Activated CD4-positive, alpha-beta memory T cell treated with anti-CD3 and anti-CD28 coated beads for 36 hours (primary cell): ENCODE measurements at regions of chr7 and their contacts with region 1.

Region 1: DNA sequence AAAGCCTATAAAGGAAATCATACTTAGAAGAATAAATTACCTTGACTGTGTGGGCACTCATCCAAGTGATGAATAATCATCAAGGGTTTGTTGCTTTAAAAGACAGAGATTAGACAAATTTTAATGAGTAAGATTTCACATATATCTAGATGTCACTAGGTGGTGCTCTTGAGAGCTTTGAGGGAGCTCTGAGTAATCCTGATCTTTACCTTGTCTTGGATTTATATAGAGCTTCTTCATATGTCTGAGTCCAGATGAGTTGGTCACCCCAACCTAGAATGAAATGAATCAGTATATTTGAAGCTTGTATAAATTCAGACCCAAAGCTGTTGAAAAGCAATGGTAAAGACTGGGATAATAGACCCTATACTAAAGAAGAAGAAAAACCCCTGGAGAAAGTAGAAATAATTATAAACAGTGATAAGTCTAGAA is 3.7 kb downstream of the AGR2 start:
- DNase-seq: no peak
- H3K4me3 Mint-ChIP-seq: no peak overlapping the region
- H3K27ac Mint-ChIP-seq: no peak overlapping the region
- H3K4me1 Mint-ChIP-seq: no peaks in the 10 kb centered on the region
- H3K27me3 Mint-ChIP-seq: peaks cover 7% of the 10 kb centered on the region

Region 2: DNA sequence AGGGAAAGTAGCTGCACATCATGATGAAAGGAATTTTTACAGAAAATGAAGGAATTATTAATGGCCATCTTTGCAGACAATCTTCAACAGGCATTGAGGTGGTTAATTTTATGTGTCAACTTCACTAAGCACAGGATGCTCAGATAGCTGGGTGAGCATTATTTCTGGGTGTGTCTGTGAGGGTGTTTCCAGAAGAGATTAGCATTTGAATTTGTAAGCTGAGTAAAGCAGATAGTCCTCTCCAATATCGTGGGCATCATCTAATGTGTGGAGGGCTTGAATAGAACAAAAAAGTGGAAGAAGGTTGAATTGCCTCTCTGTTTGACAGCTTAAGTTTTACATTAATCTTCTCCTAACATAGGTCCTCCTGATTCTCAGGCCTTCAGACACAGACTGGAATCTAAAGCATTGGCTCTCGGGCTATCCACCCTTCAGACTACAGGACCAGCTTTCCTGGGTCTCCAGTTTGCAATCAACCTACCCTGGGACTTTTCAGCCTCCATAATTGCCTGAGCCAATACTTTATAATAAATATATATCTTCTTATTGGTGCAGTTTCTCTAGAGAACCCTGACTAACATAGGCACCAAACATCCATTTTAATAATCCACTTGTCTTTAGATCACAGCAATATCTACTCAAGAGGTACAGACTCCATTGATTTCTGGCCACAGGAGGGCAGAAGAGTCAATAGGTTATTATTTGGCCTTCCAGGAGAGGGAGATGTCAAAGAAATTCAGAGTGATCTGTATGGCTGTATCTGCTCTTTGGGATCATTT is 369.3 kb before region 1 on chr7:
- CTCF ChIA-PET with region 1: no interaction called
- POLR2A ChIA-PET with region 1: no interaction called
- intact Hi-C with region 1: no loop called
- DNase-seq: peak; percentile 18
- H3K4me3 Mint-ChIP-seq: no peak overlapping the region
- H3K27ac Mint-ChIP-seq: no peak overlapping the region
- H3K4me1 Mint-ChIP-seq: no peaks in the 10 kb centered on the region
- H3K27me3 Mint-ChIP-seq: no peaks in the 10 kb centered on the region

Region 3: GRCh38 chr7:16780596-16780995 is 20.5 kb before region 1 on chr7:
- CTCF ChIA-PET with region 1: interaction called, 13 read pairs
- POLR2A ChIA-PET with region 1: no interaction called
- intact Hi-C with region 1: no loop called
- DNase-seq: no peak
- H3K4me3 Mint-ChIP-seq: no peak overlapping the region
- H3K27ac Mint-ChIP-seq: no peak overlapping the region
- H3K4me1 Mint-ChIP-seq: no peaks in the 10 kb centered on the region
- H3K27me3 Mint-ChIP-seq: peaks cover 3% of the 10 kb centered on the region

Region 4: DNA sequence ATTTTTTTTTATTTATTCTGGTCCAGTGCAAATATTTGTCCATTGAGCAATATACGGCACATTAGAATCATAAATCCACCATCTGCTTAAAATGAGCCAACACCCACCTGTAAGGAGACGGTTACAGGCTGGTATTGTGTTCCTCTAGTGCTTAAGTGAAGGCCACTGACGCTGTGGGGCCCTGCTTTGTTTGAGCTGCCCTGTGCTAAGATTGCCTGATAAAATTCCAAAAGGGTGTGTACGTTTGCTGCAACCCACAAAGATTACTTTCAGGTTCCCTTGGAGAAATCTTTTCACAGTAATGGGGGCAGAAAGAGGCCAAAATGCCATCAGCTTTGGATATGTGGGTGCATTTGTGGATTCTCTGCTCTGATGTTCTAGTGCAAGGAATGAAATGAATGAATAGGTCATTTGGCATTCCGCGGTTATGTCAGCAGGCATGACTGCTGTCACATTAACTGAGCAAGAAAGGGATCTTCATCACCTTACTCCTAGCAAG is 46.3 kb after region 1 on chr7:
- CTCF ChIA-PET with region 1: no interaction called
- POLR2A ChIA-PET with region 1: no interaction called
- intact Hi-C with region 1: no loop called
- DNase-seq: no peak
- H3K4me3 Mint-ChIP-seq: no peak overlapping the region
- H3K27ac Mint-ChIP-seq: no peak overlapping the region
- H3K4me1 Mint-ChIP-seq: peaks cover 2% of the 10 kb centered on the region
- H3K27me3 Mint-ChIP-seq: peaks cover 38% of the 10 kb centered on the region